AG04449 (cell line): ENCODE measurements at regions of chr7 and their contacts with region 1.

Region 1: GRCh38 chr7:150368096-150368883 is at the start of gene REPIN1:
- DNase-seq: no peak
- H3K4me3 ChIP-seq: peak within 1 kb of the TSS; percentile 89
- CTCF ChIP-seq: no peak

Region 2: DNA sequence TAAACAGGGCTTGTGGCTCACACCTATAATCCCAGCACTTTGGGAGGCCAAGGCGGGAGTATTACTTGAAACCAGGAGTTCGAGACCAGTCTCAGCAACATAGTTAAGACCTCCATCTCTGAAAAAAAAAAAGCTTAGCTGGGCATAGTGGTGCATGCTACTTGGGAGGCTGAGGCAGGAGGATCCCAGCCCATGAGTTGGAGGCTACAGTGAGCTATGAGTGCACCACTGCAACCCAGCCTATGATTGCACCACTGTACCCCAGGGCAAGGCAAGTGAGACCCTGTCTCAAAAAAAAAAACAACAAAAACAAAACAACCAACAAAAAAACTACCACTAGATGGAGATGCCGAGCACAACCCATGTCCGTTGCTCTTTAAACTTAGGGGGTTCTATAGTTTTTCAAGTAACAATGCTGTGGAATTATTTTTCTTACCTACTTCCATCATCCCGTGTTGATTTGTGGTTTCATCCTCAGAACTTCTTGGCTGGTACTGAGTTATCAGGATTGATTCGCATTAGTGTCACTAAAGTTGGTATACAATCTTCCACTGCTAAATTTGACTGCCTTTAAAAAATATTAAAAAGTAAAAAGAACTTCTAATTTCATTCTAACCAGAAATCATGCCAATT is 11.9 kb before region 1 on chr7:
- CTCF ChIA-PET with region 1: interaction called, 37 read pairs
- POLR2A ChIA-PET with region 1: no interaction called
- DNase-seq: no peak
- H3K4me3 ChIP-seq: no peak overlapping the region
- CTCF ChIP-seq: peak; percentile 49

Region 3: GRCh38 chr7:150378853-150379440 is 10.7 kb after region 1 on chr7 and contains the start of gene ZNF775:
- CTCF ChIA-PET with region 1: interaction called, 15 read pairs
- POLR2A ChIA-PET with region 1: interaction called, 12 read pairs
- DNase-seq: peak; percentile 45
- H3K4me3 ChIP-seq: peak within 1 kb of the TSS; percentile 81
- CTCF ChIP-seq: no peak

Region 4: GRCh38 chr7:150448789-150449147 is 80.5 kb after region 1 on chr7:
- CTCF ChIA-PET with region 1: no interaction called
- POLR2A ChIA-PET with region 1: no interaction called
- DNase-seq: no peak
- H3K4me3 ChIP-seq: no peak overlapping the region
- CTCF ChIP-seq: peak; percentile 88